Ascending aorta (tissue), 2 donors: ENCODE measurements at regions of chr7 and their contacts with region 1.

Region 1: DNA sequence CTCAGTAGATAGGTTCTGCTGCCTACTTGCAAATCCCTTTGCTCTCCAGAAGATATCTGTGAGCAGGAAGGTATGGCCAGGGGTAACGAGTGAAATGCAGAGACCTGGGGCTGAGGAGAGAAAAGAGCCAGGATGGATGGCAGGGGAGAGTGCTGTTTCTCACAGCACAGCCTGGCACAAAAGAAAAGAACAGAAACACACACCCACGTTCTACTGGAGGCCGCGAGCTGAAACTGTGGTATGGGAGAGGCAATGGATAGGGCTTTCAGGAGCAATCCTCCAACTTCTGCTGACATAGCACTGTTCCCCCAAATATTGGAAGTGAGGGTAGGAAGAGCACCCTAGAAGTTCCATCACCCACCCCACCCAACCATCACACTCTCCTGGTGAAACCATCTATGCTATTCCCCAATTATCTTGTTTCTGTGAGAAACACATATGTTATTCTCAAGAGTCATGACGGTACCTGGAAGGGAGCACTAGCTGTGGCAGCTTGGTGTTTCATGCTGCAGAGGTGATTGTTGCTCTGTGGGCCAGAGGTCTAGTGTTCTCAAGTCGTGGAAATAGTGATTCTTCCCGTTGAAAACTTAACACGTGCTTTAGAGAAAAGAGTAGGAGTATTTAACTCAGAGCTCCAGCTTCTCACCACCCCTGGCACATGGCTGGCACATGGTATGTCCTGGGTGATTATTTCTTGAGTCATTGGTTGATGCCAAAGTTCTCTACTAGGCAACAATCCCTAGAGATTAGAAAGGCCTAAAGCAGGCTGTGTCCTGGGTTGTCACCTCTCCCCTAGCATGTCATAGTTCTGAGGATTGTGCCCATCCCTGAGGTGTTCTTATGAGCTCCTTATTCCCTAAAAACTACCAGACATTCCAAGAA is 198.3 kb downstream of the PLXNA4 start:
- DNase-seq: no peak
- H3K4me3 ChIP-seq: no peak overlapping the region
- H3K27ac ChIP-seq: peak overlapping the region in 1 of 2 donors; percentile 19
- H3K4me1 ChIP-seq: peaks cover 0 to 34% of the 10 kb centered on the region in 2 donors
- H3K27me3 ChIP-seq: no peaks in the 10 kb centered on the region
- CTCF ChIP-seq: no peak

Region 2: GRCh38 chr7:132359743-132360142 is 18.2 kb before region 1 on chr7:
- intact Hi-C with region 1: loop called (anchors 2 kb)
- DNase-seq: no peak
- H3K4me3 ChIP-seq: no peak overlapping the region
- H3K27ac ChIP-seq: no peak overlapping the region
- H3K4me1 ChIP-seq: peaks cover 0 to 16% of the 10 kb centered on the region in 2 donors
- H3K27me3 ChIP-seq: no peaks in the 10 kb centered on the region
- CTCF ChIP-seq: no peak